Activated T-helper 1 cell treated with anti-CD3 and anti-CD28 coated beads, Interleukin-12 subunit alpha, Interleukin-12 subunit beta, Interleukin-2, Interleukin-4 antibody, amounts not matched to agents 30 ng/mL and 10 ng/mL and 1 ng/mL, durations not matched to agents 14 hours and 24 hours and 36 hours (primary cell): ENCODE measurements at regions of chr4 and their contacts with region 1.

Region 1: GRCh38 chr4:6898763-6899162 is 10.9 kb upstream of the TBC1D14 start:
- DNase-seq: no peak
- H3K4me3 Mint-ChIP-seq: peak overlapping the region; percentile 72
- H3K27ac Mint-ChIP-seq: peak overlapping the region; percentile 97
- H3K4me1 Mint-ChIP-seq: peaks cover 49% of the 10 kb centered on the region
- H3K27me3 Mint-ChIP-seq: no peaks in the 10 kb centered on the region

Region 2: GRCh38 chr4:6917461-6918271 is 18.9 kb after region 1 on chr4:
- intact Hi-C with region 1: loop called (anchors 2 kb)
- DNase-seq: no peak
- H3K4me3 Mint-ChIP-seq: peak overlapping the region; percentile 71
- H3K27ac Mint-ChIP-seq: peak overlapping the region; percentile 88
- H3K4me1 Mint-ChIP-seq: peaks cover 67% of the 10 kb centered on the region
- H3K27me3 Mint-ChIP-seq: peaks cover 2% of the 10 kb centered on the region

Region 3: GRCh38 chr4:6926681-6927478 is 28.1 kb after region 1 on chr4:
- intact Hi-C with region 1: loop called (anchors 2 kb)
- DNase-seq: peak; percentile 43
- H3K4me3 Mint-ChIP-seq: peak overlapping the region; percentile 72
- H3K27ac Mint-ChIP-seq: peak overlapping the region; percentile 63
- H3K4me1 Mint-ChIP-seq: peaks cover 80% of the 10 kb centered on the region
- H3K27me3 Mint-ChIP-seq: no peaks in the 10 kb centered on the region

Region 4: DNA sequence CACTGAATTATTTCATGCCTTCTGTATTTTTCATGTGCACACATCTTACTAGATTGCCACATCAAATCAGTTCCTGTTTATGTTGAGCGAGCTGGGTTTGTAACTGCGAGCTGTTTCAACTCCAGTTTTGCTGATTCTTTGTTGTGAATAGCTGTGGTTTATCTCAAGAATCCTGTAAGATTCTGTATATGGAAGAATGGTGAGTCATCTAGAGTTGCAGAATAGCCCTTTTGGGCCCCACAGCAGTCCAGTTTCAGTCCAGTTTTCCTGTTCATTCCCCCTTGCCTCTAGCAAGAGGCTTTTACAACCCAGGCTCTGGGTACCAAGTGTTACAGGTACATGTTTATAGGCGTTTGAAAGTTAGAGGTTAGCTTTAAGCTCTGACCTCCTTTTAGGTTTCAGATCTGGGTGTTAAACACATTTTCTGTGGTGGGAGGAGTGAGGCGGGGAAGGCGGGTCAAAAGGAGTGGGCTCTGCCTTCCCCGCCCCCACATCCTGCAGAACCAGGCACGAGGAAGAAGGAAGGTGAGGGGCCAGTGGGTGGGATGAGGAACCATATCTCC is 43.6 kb after region 1 on chr4:
- intact Hi-C with region 1: loop called (anchors 1 kb)
- DNase-seq: peak; percentile 39
- H3K4me3 Mint-ChIP-seq: peak overlapping the region; percentile 61
- H3K27ac Mint-ChIP-seq: peak overlapping the region; percentile 85
- H3K4me1 Mint-ChIP-seq: peaks cover 53% of the 10 kb centered on the region
- H3K27me3 Mint-ChIP-seq: no peaks in the 10 kb centered on the region